OCI-LY7 (cell line): ENCODE measurements at regions of chrX and their contacts with region 1.

Region 1: GRCh38 chrX:13064599-13065143 is 20.3 kb upstream of the FAM9C start:
- DNase-seq: no peak
- H3K4me3 ChIP-seq: no peak overlapping the region
- H3K27ac ChIP-seq: no peak overlapping the region
- H3K4me1 ChIP-seq: no peaks in the 10 kb centered on the region
- CTCF ChIP-seq: no peak

Region 2: DNA sequence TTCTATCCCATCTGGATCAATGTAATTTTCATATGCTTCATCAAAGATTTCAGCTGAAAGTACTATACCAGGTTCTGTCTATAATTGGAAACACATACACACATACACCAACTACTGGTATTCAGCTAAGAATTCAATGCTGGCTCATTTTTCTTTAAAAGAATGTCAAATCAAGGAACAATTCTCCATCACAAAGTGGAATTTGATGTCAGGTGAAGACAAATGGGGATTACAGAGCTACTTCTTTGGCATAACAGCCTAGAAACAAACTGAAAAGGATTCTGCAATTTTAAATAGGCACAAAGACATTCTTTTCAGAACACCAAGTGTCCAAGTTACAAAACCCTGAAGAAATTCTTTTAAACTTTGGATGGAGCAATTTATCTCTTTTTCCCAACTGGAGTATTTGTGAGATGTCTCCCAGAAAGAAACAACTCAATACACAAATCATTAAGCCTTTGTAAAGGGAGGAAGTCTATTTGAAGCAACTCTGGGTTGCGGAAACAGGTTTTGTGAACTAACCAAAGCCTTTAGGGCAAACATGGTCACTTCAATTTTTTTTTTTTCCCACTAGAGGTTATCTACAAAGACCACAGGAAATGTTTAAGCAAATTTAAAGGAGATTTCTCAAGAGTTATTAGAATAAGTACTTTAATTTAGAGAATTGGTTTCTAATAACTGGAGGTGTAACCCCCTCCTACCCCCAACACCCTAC is 18.4 kb before region 1 on chrX:
- CTCF ChIA-PET with region 1: no interaction called
- POLR2A ChIA-PET with region 1: interaction called, 10 read pairs
- intact Hi-C with region 1: no loop called
- DNase-seq: no peak
- H3K4me3 ChIP-seq: no peak overlapping the region
- H3K27ac ChIP-seq: no peak overlapping the region
- H3K4me1 ChIP-seq: peaks cover 22% of the 10 kb centered on the region
- CTCF ChIP-seq: no peak

Region 3: GRCh38 chrX:14398725-14399124 is 1334.1 kb after region 1 on chrX:
- CTCF ChIA-PET with region 1: no interaction called
- POLR2A ChIA-PET with region 1: no interaction called
- intact Hi-C with region 1: no loop called
- DNase-seq: no peak
- H3K4me3 ChIP-seq: no peak overlapping the region
- H3K27ac ChIP-seq: no peak overlapping the region
- H3K4me1 ChIP-seq: no peaks in the 10 kb centered on the region
- CTCF ChIP-seq: no peak